ENCODE measurements at regions of chr19 and their contacts with region 1.

Region 1: DNA sequence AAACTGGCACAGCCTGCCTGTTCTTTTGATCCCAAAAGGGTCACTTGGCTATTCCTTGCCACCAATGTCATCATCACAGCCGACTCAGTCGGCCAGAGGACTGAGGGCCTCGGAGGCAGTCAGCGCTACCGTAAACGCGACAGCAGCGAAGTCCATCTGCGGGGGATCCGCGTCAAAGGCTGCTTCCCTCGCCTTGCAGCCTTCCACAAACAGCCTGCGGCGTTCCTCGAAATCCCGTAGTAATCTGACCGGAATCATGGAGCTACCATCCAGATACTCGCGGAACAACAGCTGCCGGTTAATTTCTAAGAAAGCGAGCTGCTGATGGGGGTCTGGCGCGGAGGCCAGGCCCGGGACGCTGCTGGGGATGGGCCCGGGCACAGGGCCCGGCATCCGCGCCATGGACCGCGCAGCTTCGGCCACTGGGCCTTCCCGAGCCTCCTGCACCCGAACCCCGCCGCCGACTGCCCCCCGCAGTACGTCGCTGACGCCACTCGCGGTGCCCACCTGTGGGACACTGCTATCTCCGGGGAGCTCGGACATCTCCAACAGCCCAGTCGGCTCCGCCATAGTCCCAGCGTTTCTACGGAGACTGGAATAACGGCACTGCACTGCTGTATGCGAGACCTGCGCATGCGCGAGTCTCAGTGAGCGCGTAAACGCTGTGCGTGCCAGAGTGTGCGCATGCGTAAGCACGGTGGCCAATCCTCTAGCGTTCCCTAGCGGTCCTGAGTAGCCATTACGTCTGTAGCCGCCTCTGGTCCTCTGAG is at the start of gene EID2B:
- DNase-seq: peak; percentile 95
- ATAC-seq: peak; percentile 93
- H3K4me3 Mint-ChIP-seq: peak within 1 kb of the TSS; percentile 92
- H3K27ac Mint-ChIP-seq: peak within 1 kb of the TSS; percentile 87
- H3K4me1 Mint-ChIP-seq: peaks cover 23% of the 10 kb centered on the region
- H3K27me3 Mint-ChIP-seq: no peaks in the 10 kb centered on the region
- total RNA-seq, gene EID2B: 4.1 to 4.3 TPM

Region 2: GRCh38 chr19:39474139-39474622 is 58.2 kb before region 1 on chr19:
- CTCF ChIA-PET with region 1: interaction called, 29 read pairs
- POLR2A ChIA-PET with region 1: interaction called, 3 read pairs
- DNase-seq: peak; percentile 72
- ATAC-seq: peak; percentile 67
- H3K4me3 Mint-ChIP-seq: no peak overlapping the region
- H3K27ac Mint-ChIP-seq: peak overlapping the region; percentile 49
- H3K4me1 Mint-ChIP-seq: peaks cover 16% of the 10 kb centered on the region
- H3K27me3 Mint-ChIP-seq: no peaks in the 10 kb centered on the region

Region 3: DNA sequence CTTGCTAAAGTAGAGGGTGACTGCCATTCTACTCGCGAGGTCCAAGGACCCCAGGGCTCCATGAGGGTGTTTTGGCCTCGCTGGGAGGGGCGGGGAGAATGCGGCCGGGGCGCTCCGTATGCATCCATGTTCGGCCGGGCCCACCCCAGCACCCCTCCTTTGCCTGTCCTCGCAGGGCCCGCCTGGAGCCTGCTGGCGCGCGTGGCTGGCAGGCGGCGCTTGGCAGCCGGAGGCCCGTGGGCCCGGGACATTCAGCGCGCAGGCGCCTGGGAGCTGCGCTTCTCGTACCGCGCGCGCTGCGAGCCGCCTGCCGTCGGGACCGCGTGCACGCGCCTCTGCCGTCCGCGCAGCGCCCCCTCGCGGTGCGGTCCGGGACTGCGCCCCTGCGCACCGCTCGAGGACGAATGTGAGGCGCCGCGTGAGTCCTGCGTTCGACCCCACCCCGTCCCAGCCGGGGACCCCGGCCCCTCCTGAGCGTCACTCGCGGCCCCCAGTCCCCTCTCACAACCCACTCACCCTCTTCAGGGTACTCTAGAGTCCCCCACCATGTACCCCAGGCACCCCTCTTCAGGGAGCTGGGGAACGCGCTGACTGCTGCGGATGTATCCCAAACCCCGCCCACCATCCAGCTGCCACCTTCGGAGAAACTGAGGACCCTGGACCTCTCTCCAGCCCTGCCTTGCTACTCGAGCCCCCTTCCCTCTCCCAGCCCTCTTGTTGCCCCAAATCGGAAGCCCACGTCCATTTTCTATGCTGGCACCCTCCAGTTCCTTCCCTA is 29.6 kb before region 1 on chr19:
- CTCF ChIA-PET with region 1: interaction called, 11 read pairs
- POLR2A ChIA-PET with region 1: no interaction called
- DNase-seq: peak; percentile 78
- ATAC-seq: peak; percentile 54
- H3K4me3 Mint-ChIP-seq: no peak overlapping the region
- H3K27ac Mint-ChIP-seq: peak overlapping the region; percentile 60
- H3K4me1 Mint-ChIP-seq: peaks cover 42% of the 10 kb centered on the region
- H3K27me3 Mint-ChIP-seq: peaks cover 59% of the 10 kb centered on the region

Region 4: DNA sequence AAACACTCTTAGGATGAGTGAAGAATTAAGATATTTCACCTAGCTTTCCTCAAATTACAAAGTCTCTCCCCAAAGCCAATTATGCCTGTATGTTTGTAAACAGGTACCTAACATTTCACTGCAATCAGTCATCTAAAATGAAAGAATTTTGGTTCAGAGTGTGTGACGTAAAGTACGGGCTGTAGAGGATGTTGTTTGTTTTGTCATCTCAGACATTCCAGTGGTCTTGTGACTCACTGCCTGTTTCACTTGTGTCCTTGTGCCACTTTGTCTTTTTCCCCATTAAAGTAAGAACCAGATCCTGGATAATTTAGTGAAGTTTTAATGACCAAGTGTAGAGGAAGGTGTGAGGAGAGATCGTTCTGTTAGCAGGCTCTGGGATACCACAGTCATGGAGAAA is 36.2 kb after region 1 on chr19:
- CTCF ChIA-PET with region 1: no interaction called
- POLR2A ChIA-PET with region 1: no interaction called
- DNase-seq: no peak
- ATAC-seq: no peak
- H3K4me3 Mint-ChIP-seq: no peak overlapping the region
- H3K27ac Mint-ChIP-seq: no peak overlapping the region
- H3K4me1 Mint-ChIP-seq: no peaks in the 10 kb centered on the region
- H3K27me3 Mint-ChIP-seq: peaks cover 46% of the 10 kb centered on the region

Region 5: GRCh38 chr19:39590265-39590664 is 57.8 kb after region 1 on chr19:
- CTCF ChIA-PET with region 1: no interaction called
- POLR2A ChIA-PET with region 1: no interaction called
- DNase-seq: peak; percentile 36
- ATAC-seq: no peak
- H3K4me3 Mint-ChIP-seq: no peak overlapping the region
- H3K27ac Mint-ChIP-seq: no peak overlapping the region
- H3K4me1 Mint-ChIP-seq: no peaks in the 10 kb centered on the region
- H3K27me3 Mint-ChIP-seq: peaks cover 13% of the 10 kb centered on the region

Region 6: GRCh38 chr19:39661565-39661964 is 129.1 kb after region 1 on chr19:
- CTCF ChIA-PET with region 1: no interaction called
- POLR2A ChIA-PET with region 1: no interaction called
- DNase-seq: no peak
- ATAC-seq: no peak
- H3K4me3 Mint-ChIP-seq: no peak overlapping the region
- H3K27ac Mint-ChIP-seq: no peak overlapping the region
- H3K4me1 Mint-ChIP-seq: no peaks in the 10 kb centered on the region
- H3K27me3 Mint-ChIP-seq: peaks cover 6% of the 10 kb centered on the region

Region 7: DNA sequence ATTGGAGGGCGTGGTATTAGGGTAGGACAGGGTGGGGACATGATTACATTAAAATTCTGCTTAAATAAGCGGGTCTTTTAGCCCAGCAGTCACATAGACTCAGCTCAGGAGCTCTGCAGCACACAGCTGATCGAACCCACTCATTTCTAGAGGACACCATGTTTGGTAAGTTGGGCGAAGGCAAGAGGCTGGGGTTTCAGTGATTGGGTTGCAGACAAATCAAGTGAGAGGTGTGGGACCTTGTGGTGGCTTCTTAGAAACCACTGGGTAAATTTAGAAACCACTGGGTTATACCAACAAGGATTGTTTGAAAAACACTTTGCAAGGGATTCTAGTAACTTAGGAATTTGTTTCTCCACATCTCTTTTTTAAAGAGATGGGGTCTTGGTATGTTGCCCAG is 246.3 kb after region 1 on chr19 and contains the start of gene LEUTX:
- CTCF ChIA-PET with region 1: no interaction called
- POLR2A ChIA-PET with region 1: no interaction called
- DNase-seq: peak; percentile 33
- ATAC-seq: no peak
- H3K4me3 Mint-ChIP-seq: no peak within 1 kb of the TSS
- H3K27ac Mint-ChIP-seq: no peak within 1 kb of the TSS
- H3K4me1 Mint-ChIP-seq: peaks cover 15% of the 10 kb centered on the region
- H3K27me3 Mint-ChIP-seq: peaks cover 34% of the 10 kb centered on the region
- total RNA-seq, gene LEUTX: not detected

Measured in activated CD8-positive, alpha-beta T cell treated with anti-CD3 and anti-CD28 coated beads, Interleukin-2, amount 10 ng/mL, durations not matched to agents 7 days and 5 days (primary cell).